Cardiac septum (tissue), 1 donor: ENCODE measurements at regions of chr11 and their contacts with region 1.

Region 1: DNA sequence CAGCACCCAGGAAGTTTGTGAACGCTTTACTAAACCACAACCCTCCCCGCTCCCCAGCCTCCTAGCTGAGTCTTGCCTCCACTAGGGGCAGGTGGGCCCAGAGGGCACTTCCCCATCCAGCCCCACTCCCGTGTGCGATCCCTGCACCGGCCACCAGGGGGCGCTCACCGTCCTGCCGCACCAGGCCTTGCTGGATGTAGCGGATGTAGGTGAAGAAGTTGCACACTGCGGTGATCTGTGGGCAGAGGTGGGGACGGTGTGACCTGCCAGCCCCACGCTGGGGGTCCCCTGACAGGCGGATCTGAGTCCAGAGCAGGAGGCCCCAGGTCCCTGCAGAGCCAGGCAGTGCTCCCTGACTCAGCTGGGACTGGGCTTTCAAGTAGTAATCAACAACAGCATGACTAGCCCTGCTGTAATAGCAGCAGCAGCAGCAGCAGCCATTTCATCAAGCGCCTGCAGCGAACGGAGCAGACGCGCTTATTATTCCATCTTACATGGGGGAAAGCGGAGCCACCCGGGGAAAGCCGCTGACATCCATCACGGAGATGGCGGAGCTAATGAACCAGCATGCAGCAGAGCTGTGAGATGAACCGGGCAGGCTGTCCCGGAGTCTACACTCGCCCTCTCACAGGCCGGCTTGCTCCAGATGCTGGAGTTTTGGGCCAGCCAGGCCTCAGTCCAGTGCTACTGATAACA is 7.9 kb upstream of the FADS3 start:
- DNase-seq: peak; percentile 97

Region 2: DNA sequence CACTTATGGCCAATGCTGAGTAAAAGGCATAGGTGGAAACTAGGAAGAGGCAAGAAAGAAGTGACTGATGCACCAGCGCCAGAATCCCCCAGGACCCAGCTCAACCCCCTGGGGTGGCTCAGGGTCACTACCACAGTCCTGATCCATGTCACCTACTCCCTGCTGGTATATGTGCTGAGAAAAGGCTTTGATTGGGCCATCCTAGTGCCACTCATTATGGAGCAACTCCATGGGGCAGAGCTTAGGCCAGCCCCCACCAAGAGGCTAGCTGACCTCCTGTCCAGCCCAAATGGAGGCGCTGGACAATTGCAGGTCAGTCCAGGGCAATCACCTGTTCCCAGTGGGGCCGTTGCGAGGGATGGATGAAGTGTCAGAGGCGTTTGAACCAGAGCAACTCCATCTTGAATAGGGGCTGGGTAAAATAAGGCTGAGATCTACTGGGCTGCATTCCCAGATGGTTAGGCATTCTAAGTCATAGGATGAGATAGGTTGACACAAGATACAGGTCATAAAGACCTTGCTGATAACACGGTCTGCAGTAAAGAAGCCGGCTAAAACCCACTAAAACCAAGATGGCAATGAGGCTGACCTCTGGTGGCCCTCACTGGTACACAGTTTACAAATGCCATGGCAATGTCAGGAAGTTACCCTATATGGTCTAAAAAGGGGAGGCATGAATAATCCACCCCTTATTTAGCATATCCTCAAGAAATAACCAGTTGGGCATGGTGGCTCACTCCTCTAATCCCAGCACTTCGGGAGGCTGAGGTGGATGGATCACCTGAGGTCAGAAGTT is 239.7 kb before region 1 on chr11:
- intact Hi-C with region 1: no loop called
- DNase-seq: no peak

Region 3: DNA sequence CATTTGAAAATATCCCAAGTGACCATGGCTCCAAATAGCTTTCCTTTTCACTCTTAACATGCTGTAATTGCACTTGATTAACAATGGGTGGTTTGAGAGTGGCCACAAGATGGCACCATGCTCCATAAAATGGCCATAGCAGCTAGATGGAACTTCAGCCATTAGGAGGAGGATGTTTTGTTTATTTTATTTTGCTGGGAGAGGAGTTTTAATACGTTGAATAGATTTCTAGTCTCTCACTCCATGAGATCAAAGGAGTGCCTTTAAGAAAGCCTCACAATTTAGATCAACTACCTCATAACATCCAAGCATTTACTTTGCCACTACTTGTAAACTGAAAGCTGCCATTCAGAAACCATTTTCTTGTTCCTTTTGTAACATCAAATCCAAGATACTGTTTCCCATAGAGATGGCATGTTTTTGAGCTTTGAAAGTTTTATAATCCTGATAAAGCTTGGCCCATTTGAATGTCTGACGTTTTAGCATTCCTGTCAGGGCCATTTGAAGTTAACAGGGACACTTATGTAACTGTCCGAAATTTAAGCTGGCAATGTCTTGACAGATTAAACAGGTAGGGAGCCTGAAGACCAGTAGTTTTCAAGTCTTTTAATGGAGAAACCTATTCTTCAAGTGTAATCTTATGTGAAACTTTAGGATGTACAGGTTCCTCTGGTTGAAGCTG is 101.9 kb before region 1 on chr11:
- intact Hi-C with region 1: loop called (anchors 5 kb)
- DNase-seq: no peak

Region 4: DNA sequence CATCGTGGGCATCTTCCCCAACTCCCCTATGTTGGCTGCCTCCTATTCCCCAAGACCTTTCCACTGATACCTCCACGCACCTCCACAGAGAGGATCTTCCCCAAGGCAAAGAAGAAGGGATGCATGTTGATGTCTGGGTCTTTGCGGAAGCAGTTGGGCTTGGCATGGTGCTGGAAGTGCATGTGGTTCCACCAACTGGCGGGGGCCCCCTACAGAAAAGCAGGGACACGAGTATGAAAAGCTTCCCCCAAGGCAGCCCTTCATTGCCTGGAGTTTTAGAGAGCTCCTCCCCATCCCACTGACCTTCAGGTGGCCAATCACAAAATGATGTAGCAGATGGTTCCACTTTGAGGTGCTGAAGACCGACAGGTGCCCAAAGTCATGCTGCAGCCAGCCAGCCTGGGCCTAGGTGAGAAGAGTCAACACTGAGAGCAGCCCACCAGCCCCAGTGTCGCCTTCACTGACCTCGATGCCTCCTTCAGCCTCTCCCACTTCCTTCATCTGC is 88.6 kb before region 1 on chr11:
- intact Hi-C with region 1: no loop called
- DNase-seq: no peak

Region 5: DNA sequence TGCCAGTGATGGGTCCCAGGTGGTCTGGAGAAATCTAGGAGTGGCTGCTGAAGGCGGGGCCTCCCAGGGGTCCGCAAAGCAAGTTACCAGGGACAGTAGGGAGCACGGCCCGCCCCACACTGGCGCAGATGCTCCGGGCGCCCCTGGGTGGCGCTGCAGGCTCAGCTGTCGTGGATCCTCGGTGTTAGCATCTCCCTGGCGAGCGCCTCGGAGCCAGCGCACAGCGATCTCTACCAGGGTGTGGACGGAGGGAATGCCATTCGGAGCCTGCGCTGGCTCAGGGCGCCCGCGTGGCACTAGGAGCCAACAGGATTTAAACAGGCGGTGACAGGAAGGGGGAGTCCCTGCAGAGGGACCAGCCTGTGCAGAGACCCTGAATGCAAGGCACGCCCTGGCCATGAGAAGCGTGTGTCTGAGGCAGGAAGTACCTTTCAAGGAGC is 28.1 kb before region 1 on chr11:
- intact Hi-C with region 1: loop called (anchors 1 kb)
- DNase-seq: peak; percentile 90

Region 6: GRCh38 chr11:62081378-62082291 is 182.3 kb after region 1 on chr11:
- intact Hi-C with region 1: loop called (anchors 1 kb)
- DNase-seq: peak; percentile 95